Activated CD4-positive, alpha-beta T cell treated with anti-CD3 and anti-CD28 coated beads for 36 hours (primary cell): ENCODE measurements at regions of chr4 and their contacts with region 1.

Region 1: DNA sequence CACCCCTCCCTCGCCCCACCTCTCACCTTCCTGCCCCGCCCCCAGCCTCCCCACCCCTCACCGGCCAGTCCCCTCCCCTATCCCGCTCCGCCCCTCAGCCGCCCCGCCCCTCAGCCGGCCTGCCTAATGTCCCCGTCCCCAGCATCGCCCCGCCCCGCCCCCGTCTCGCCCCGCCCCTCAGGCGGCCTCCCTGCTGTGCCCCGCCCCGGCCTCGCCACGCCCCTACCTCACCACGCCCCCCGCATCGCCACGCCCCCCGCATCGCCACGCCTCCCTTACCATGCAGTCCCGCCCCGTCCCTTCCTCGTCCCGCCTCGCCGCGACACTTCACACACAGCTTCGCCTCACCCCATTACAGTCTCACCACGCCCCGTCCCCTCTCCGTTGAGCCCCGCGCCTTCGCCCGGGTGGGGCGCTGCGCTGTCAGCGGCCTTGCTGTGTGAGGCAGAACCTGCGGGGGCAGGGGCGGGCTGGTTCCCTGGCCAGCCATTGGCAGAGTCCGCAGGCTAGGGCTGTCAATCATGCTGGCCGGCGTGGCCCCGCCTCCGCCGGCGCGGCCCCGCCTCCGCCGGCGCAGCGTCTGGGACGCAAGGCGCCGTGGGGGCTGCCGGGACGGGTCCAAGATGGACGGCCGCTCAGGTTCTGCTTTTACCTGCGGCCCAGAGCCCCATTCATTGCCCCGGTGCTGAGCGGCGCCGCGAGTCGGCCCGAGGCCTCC is at the starts of genes HTT and HTT-AS:
- DNase-seq: peak; percentile 100
- ATAC-seq: peak; percentile 89
- H3K4me3 Mint-ChIP-seq: peak within 1 kb of the TSS; percentile 95
- H3K27ac Mint-ChIP-seq: peak within 1 kb of the TSS; percentile 90
- H3K4me1 Mint-ChIP-seq: peaks cover 24% of the 10 kb centered on the region
- H3K27me3 Mint-ChIP-seq: no peaks in the 10 kb centered on the region
- total RNA-seq, gene HTT: 80.1 to 127 TPM
- total RNA-seq, gene HTT-AS: not detected

Region 2: GRCh38 chr4:2008875-2009703 is 1065.1 kb before region 1 on chr4 and contains the start of gene NELFA:
- CTCF ChIA-PET with region 1: no interaction called
- POLR2A ChIA-PET with region 1: no interaction called
- intact Hi-C with region 1: loop called in 1 of 2 experiments (anchors 2 kb)
- DNase-seq: peak; percentile 97
- ATAC-seq: peak; percentile 81
- H3K4me3 Mint-ChIP-seq: peak within 1 kb of the TSS; percentile 87
- H3K27ac Mint-ChIP-seq: peak within 1 kb of the TSS; percentile 90
- H3K4me1 Mint-ChIP-seq: peaks cover 34% of the 10 kb centered on the region
- H3K27me3 Mint-ChIP-seq: no peaks in the 10 kb centered on the region
- total RNA-seq, gene NELFA: 41.6 to 48.3 TPM

Region 3: DNA sequence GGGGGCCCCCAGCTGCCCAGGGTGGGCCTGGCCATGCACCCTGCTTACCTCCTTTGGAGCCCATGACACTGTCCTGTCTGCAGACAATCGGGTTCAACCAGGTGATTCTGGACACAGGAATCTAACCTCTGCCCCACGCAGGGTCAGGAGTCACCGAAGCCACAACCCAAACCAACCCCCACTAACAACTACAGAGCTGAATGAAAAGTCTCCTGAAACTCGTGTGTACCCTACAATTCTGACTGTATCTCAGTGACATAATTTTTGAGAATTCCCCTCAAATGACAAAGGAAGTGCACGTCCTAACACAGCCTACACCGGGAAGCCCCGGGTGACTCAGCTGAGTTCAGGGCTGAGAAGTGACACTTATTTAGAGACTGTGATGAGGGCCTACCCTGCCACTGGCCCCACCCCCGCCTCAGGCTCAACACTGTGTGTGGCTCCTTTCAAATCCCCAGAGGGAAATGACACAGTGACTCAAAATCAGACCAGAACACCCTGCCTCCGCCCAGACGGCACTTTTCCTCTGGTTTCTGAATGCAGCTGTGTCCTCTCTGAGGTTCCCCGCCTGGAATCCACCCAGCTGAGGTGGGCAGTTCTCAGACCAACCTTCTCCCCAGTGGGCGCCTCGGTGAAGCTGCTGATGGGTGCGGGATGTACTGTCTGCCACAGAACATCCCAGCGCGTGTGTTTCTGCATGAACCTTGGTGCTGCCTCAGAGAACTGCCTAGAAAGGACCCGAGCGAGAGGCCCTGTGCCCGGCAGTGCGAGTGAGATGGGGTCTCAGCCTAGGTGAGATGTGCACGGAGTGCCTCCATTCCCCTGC is 328.0 kb before region 1 on chr4:
- CTCF ChIA-PET with region 1: no interaction called
- POLR2A ChIA-PET with region 1: no interaction called
- intact Hi-C with region 1: loop called in 1 of 2 experiments (anchors 2 kb)
- DNase-seq: peak; percentile 98
- ATAC-seq: peak; percentile 97
- H3K4me3 Mint-ChIP-seq: peak overlapping the region; percentile 62
- H3K27ac Mint-ChIP-seq: peak overlapping the region; percentile 97
- H3K4me1 Mint-ChIP-seq: peaks cover 58% of the 10 kb centered on the region
- H3K27me3 Mint-ChIP-seq: no peaks in the 10 kb centered on the region

Region 4: DNA sequence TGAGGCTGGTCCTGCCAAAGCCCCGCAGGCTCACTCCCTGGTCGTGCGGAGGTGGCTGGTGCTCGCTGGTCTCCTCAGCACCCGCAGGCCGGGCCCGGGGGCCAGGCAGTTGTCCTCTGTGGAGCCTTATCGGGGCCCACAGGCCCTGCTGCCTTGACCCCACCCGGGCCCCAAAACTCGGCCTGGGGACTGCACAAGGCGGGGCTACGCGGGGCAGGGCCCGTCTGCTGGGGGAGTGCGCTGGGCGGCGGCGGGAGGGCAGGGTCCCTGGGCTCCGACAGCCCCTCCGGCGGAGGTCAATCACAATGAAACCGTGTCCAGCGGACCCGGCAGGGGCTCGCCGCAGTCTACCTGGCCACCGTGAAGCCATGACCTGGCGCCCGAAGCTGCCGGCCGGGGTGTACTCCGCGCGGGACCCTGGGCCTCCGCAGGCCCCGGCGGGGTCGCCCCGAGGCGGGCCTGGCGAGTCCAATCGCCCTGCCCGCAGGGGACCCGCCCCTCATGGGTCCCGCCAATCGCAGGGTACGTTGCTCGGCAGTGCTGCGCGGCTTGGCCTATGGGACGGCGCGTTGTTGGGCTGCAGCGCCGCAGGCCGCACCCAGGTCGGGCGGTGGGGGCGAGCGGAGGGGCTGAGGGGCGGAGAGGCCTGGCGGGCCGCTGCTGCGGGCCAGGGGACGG is 230.8 kb before region 1 on chr4 and contains the start of gene ADD1:
- CTCF ChIA-PET with region 1: no interaction called
- POLR2A ChIA-PET with region 1: no interaction called
- intact Hi-C with region 1: loop called in 1 of 2 experiments (anchors 1 kb)
- DNase-seq: peak; percentile 94
- ATAC-seq: peak; percentile 88
- H3K4me3 Mint-ChIP-seq: peak within 1 kb of the TSS; percentile 88
- H3K27ac Mint-ChIP-seq: peak within 1 kb of the TSS; percentile 89
- H3K4me1 Mint-ChIP-seq: peaks cover 56% of the 10 kb centered on the region
- H3K27me3 Mint-ChIP-seq: no peaks in the 10 kb centered on the region
- total RNA-seq, gene ADD1: 196 to 206 TPM

Region 5: GRCh38 chr4:3085948-3086655 is 11.9 kb after region 1 on chr4:
- CTCF ChIA-PET with region 1: interaction called, 4 read pairs
- POLR2A ChIA-PET with region 1: no interaction called
- intact Hi-C with region 1: loop called in 1 of 2 experiments (anchors 1 kb)
- DNase-seq: no peak
- ATAC-seq: peak; percentile 50
- H3K4me3 Mint-ChIP-seq: peak overlapping the region; percentile 20
- H3K27ac Mint-ChIP-seq: peak overlapping the region; percentile 96
- H3K4me1 Mint-ChIP-seq: peaks cover 68% of the 10 kb centered on the region
- H3K27me3 Mint-ChIP-seq: no peaks in the 10 kb centered on the region

Region 6: GRCh38 chr4:3220476-3221183 is 146.4 kb after region 1 on chr4:
- CTCF ChIA-PET with region 1: no interaction called
- POLR2A ChIA-PET with region 1: no interaction called
- intact Hi-C with region 1: no loop called
- DNase-seq: no peak
- ATAC-seq: no peak
- H3K4me3 Mint-ChIP-seq: no peak overlapping the region
- H3K27ac Mint-ChIP-seq: no peak overlapping the region
- H3K4me1 Mint-ChIP-seq: no peaks in the 10 kb centered on the region
- H3K27me3 Mint-ChIP-seq: no peaks in the 10 kb centered on the region

Region 7: DNA sequence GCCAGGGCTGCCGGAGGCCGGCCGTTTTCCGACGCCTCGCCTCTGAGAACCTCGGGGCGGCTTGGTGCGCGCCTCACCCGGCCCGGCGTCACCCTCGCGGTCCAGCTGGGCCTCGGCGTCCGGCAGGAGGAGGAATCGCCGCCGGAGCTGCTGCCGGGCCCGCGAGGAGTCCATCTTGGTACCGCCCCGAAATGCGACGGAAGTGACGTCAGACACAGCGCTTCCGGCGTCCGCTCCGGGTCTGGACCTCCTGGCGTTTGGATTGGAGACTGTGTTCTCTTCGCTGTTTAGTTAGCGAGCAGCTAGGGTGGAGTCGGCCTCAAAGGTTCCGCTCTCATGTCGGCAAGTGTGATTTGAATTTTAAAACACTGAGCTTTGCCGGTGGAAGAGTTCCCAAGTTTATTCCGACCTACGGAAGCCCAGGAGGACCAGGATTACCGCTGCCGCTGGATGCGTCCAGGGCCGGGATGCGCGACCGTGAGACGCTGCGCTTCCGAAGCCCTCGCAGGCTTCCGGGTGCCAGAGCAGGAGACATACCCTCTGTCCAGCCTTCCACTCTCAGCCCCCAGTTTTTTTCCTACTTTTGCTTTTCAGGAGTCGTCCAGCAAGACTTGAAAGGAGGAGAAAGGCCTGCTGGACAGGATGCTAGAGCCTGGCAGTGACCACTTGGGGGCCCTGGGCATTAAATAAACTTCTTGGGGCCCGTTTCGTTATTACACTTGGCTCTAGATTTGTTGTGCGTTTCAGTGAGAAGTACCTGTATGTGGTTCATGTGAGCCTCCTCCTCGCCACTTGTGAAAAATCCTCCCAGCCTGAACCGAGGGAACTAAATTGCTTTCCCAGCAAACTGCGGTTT is 1174.0 kb after region 1 on chr4 and contains the start of gene TMEM128:
- CTCF ChIA-PET with region 1: no interaction called
- POLR2A ChIA-PET with region 1: no interaction called
- intact Hi-C with region 1: loop called in 1 of 2 experiments (anchors 5 kb)
- DNase-seq: peak; percentile 95
- ATAC-seq: peak; percentile 98
- H3K4me3 Mint-ChIP-seq: peak within 1 kb of the TSS; percentile 98
- H3K27ac Mint-ChIP-seq: peak within 1 kb of the TSS; percentile 98
- H3K4me1 Mint-ChIP-seq: peaks cover 26% of the 10 kb centered on the region
- H3K27me3 Mint-ChIP-seq: no peaks in the 10 kb centered on the region
- total RNA-seq, gene TMEM128: 14.6 to 25.3 TPM